Caco-2 (cell line): ENCODE measurements at regions of chr10 and their contacts with region 1.

Region 1: DNA sequence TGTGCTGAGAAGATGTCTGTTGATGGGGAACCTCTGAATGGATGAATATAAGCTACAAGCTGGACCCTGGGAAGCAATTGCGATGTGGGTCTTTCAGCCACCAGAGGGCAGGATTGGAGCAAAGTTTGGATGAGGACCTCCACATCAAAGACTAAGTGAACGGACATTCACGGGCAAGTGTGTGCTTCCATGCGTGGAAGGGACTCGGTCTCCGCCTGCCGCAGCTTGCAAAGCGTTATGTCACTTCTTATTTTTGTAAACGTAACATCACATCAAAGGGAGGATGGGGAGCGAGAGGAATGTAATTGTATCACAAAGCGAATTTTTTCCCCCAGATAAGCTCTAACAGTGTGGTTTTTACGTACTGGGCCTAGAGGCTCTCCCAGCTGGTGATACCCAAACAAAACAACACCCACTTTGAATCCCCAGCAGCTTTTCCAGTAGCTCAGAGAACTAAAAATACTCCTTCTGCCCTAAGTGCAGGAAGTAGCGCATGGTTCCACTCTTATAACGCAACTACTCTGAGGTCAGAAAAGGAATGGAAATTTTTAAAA is 65.0 kb downstream of the VWA2 start:
- DNase-seq: peak; percentile 84 to 85
- H3K4me3 ChIP-seq: peak overlapping the region; percentile 46
- H3K4me3 Mint-ChIP-seq: peak overlapping the region; percentile 68
- H3K27ac Mint-ChIP-seq: peak overlapping the region; percentile 30
- H3K4me1 ChIP-seq: peaks cover 4% of the 10 kb centered on the region; the same call in 1 of the 2 replicates
- H3K4me1 Mint-ChIP-seq: peaks cover 10% of the 10 kb centered on the region
- H3K27me3 ChIP-seq: no peaks in the 10 kb centered on the region
- H3K27me3 Mint-ChIP-seq: no peaks in the 10 kb centered on the region
- CTCF ChIP-seq: peak; percentile 80 to 81

Region 2: DNA sequence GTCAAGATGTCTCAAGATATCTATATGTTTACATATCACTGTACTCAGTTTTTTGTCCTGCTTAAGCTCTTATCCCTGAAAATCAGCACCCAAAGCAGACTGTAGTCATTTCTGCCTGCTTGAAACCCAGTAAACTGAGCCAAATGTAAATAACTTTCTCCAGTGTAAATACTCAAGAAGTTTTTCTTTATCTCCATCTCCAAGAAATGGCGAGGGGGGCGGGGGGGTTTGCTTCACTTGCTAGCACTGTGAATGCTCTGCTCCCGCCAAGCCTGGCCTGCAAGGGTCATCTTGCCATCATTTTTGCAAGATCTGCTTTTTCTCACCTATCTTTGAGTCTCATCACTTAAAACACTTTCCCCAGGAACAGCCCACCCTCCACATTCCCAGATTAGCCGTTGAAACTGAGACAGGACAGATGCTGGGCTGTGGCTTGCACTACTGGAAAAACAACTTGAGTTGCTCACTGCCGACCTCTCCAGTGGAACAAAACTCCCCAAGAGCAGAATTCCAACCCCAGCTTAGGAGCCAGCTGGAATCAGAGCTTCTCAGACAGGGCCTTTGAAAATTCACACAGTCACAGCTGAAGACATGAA is 45.6 kb after region 1 on chr10:
- CTCF ChIA-PET with region 1: interaction called, 8 read pairs
- POLR2A ChIA-PET with region 1: no interaction called
- intact Hi-C with region 1: loop called (anchors 1 kb)
- DNase-seq: peak; percentile 57 to 68
- H3K4me3 ChIP-seq: no peak overlapping the region
- H3K4me3 Mint-ChIP-seq: peak overlapping the region; percentile 43
- H3K27ac Mint-ChIP-seq: peak overlapping the region; percentile 70
- H3K4me1 ChIP-seq: peaks cover 33% of the 10 kb centered on the region
- H3K4me1 Mint-ChIP-seq: peaks cover 34% of the 10 kb centered on the region
- H3K27me3 ChIP-seq: no peaks in the 10 kb centered on the region
- H3K27me3 Mint-ChIP-seq: no peaks in the 10 kb centered on the region
- CTCF ChIP-seq: no peak

Region 3: DNA sequence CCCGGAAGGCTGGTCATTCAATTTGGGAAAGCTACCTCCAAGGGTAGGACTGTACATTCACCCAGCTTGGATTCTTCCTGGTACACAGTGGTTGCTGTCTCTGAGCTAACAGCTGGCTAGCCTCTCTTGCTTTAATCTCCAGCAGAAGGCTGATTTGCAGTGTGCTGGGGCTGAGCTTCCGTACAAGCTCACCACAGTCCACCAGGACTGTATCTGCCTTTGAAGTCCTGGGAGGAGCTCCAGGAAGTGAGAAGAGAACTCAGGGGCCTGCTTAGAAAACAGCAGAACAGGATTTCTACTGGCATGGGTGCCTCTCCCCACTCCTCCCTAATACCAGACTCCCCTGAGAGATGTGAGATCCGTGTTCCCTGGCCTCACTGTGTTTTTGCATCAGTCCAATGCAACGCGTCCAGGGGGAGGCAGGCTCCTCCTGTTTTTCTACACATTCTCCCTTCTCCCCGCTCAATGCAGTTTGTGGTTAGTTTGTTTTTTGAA is 93.6 kb after region 1 on chr10:
- CTCF ChIA-PET with region 1: interaction called, 47 read pairs
- POLR2A ChIA-PET with region 1: no interaction called
- intact Hi-C with region 1: no loop called
- DNase-seq: no peak
- H3K4me3 ChIP-seq: no peak overlapping the region
- H3K4me3 Mint-ChIP-seq: no peak overlapping the region
- H3K27ac Mint-ChIP-seq: no peak overlapping the region
- H3K4me1 ChIP-seq: peaks cover 7% of the 10 kb centered on the region; the same call in 1 of the 2 replicates
- H3K4me1 Mint-ChIP-seq: peaks cover 4% of the 10 kb centered on the region
- H3K27me3 ChIP-seq: no peaks in the 10 kb centered on the region
- H3K27me3 Mint-ChIP-seq: peaks cover 4% of the 10 kb centered on the region
- CTCF ChIP-seq: no peak

Region 4: GRCh38 chr10:114427124-114427852 is 123.2 kb after region 1 on chr10:
- CTCF ChIA-PET with region 1: interaction called, 16 read pairs
- POLR2A ChIA-PET with region 1: no interaction called
- intact Hi-C with region 1: no loop called
- DNase-seq: no peak
- H3K4me3 ChIP-seq: no peak overlapping the region
- H3K4me3 Mint-ChIP-seq: no peak overlapping the region
- H3K27ac Mint-ChIP-seq: no peak overlapping the region
- H3K4me1 ChIP-seq: no peaks in the 10 kb centered on the region
- H3K4me1 Mint-ChIP-seq: no peaks in the 10 kb centered on the region
- H3K27me3 ChIP-seq: no peaks in the 10 kb centered on the region
- H3K27me3 Mint-ChIP-seq: no peaks in the 10 kb centered on the region
- CTCF ChIP-seq: no peak

Region 5: GRCh38 chr10:114458955-114459354 is 154.9 kb after region 1 on chr10:
- CTCF ChIA-PET with region 1: interaction called, 13 read pairs
- POLR2A ChIA-PET with region 1: no interaction called
- intact Hi-C with region 1: loop called (anchors 1 kb)
- DNase-seq: peak; percentile 55 to 64
- H3K4me3 ChIP-seq: no peak overlapping the region
- H3K4me3 Mint-ChIP-seq: no peak overlapping the region
- H3K27ac Mint-ChIP-seq: no peak overlapping the region
- H3K4me1 ChIP-seq: no peaks in the 10 kb centered on the region
- H3K4me1 Mint-ChIP-seq: no peaks in the 10 kb centered on the region
- H3K27me3 ChIP-seq: no peaks in the 10 kb centered on the region
- H3K27me3 Mint-ChIP-seq: no peaks in the 10 kb centered on the region
- CTCF ChIP-seq: peak in 1 of 2 experiments; percentile 43

Region 6: DNA sequence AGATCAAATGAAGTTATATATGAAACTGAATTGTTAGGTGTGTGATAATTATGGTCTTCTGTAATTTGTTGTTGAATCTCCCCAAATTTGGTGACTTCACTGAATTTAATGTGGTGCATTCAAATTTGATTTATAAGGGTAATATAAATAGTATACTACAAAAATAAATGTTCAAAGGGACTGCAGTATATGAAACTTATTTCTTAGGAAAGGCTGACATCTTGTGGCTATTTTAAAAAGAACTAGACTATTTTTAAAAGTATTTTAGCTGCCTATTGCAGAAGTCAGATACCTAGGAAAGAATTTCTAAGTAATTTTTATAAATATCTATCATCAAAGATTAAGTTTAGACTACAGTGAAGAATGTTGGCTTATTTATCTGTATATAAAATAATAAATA is 825.7 kb after region 1 on chr10:
- CTCF ChIA-PET with region 1: no interaction called
- POLR2A ChIA-PET with region 1: no interaction called
- intact Hi-C with region 1: loop called (anchors 10 kb)
- DNase-seq: peak in 1 of 2 experiments; percentile 3
- H3K4me3 ChIP-seq: no peak overlapping the region
- H3K4me3 Mint-ChIP-seq: no peak overlapping the region
- H3K27ac Mint-ChIP-seq: no peak overlapping the region
- H3K4me1 ChIP-seq: no peaks in the 10 kb centered on the region
- H3K4me1 Mint-ChIP-seq: no peaks in the 10 kb centered on the region
- H3K27me3 ChIP-seq: no peaks in the 10 kb centered on the region
- H3K27me3 Mint-ChIP-seq: peaks cover 5% of the 10 kb centered on the region
- CTCF ChIP-seq: no peak